ENCODE measurements at regions of chr17 and their contacts with region 1.

Region 1: DNA sequence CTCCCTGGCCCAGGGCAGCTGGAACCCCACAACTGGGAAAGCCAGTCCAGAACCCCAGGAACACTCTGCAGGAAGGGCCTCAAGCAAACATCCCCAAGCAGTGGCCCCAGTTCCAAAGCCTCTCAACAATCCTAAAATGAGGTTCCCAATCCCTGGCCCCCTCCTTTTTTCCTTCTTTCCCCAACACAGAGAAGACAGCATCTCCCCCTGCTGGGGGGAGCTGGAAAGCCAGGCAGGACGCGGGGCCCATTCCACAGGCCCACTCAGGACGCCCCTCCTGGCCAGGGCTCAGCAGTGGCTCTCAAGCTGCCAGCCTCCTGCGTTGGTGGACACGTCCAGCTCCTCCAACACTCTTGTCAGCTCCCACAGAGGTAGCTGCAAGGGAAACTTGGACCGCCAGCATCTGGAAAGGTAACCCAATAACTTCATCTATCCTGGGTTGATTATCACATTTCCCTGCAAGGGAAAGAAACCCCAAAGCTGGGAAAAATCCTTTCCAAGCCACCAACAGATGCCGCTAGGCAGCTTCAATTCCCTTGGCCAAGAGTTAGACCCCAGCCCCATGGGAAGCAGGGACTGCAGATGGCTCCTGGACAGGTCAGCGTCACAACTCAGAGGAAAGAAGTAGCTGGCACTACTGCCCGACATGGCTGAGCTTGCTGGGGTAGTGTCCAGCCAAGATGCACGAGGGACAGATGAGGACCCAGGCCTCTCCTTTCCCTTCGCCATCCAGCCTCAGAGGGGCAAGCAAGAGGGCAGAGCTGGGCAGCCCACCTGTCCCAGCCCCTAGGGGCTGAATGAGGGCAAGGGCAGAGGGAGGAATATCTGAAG is 7.6 kb downstream of the HDAC5 start:
- DNase-seq: peak in 1 of 2 experiments; percentile 74
- H3K4me3 ChIP-seq: no peak overlapping the region
- H3K4me3 Mint-ChIP-seq: no peak overlapping the region
- H3K27ac Mint-ChIP-seq: no peak overlapping the region
- H3K4me1 ChIP-seq: no peaks in the 10 kb centered on the region
- H3K4me1 Mint-ChIP-seq: no peaks in the 10 kb centered on the region
- H3K27me3 ChIP-seq: no peaks in the 10 kb centered on the region
- H3K27me3 Mint-ChIP-seq: no peaks in the 10 kb centered on the region
- CTCF ChIP-seq: peak; percentile 86 to 92

Region 2: GRCh38 chr17:44084131-44084544 is 31.7 kb before region 1 on chr17:
- CTCF ChIA-PET with region 1: interaction called, 38 read pairs
- POLR2A ChIA-PET with region 1: no interaction called
- intact Hi-C with region 1: no loop called
- DNase-seq: peak in 1 of 2 experiments; percentile 49
- H3K4me3 ChIP-seq: no peak overlapping the region
- H3K4me3 Mint-ChIP-seq: no peak overlapping the region
- H3K27ac Mint-ChIP-seq: no peak overlapping the region
- H3K4me1 ChIP-seq: peaks cover 25% of the 10 kb centered on the region
- H3K4me1 Mint-ChIP-seq: peaks cover 14% of the 10 kb centered on the region
- H3K27me3 ChIP-seq: no peaks in the 10 kb centered on the region
- H3K27me3 Mint-ChIP-seq: no peaks in the 10 kb centered on the region
- CTCF ChIP-seq: peak; percentile 27 to 42

Region 3: DNA sequence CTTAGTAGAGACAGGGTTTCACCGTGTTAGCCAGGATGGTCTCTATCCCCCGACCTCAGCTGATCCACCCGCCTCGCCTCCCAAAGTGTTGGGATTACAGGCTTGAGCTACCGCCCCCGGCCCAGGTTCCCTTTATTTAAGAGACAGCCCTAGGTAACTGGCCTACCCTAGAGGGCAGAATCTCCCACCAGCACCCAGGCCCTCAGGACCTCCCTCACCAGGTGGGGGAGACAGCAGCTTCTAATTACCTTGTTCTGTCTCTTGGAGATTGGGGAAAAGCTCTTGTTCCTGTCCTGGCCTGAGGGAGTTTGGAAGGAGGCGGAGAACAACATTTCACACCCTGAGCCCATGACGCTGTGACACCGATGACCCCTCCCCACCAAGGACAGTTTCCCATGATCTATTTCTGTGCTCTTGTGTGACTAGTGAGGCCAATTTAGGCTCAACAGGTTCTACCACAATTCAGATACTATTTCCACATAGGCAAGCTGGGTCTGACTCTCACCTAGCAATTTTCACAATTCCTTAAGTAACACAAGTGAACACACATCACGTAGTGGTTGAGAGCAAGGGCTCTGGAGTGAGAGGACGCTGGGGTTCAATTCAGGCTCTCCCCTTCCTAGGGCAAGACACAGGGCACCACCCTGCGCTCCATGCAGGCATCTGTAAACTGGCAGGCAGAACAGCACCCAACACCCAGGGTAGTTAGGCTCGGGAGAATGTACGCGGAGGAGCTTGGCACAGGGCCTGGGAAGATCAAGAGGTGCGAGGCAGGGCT is 12.8 kb before region 1 on chr17:
- CTCF ChIA-PET with region 1: interaction called, 17 read pairs
- POLR2A ChIA-PET with region 1: interaction called, 6 read pairs
- intact Hi-C with region 1: no loop called
- DNase-seq: peak; percentile 78 to 79
- H3K4me3 ChIP-seq: no peak overlapping the region
- H3K4me3 Mint-ChIP-seq: peak overlapping the region; percentile 32
- H3K27ac Mint-ChIP-seq: peak overlapping the region; percentile 87
- H3K4me1 ChIP-seq: peaks cover 12% of the 10 kb centered on the region
- H3K4me1 Mint-ChIP-seq: peaks cover 8% of the 10 kb centered on the region
- H3K27me3 ChIP-seq: no peaks in the 10 kb centered on the region
- H3K27me3 Mint-ChIP-seq: no peaks in the 10 kb centered on the region
- CTCF ChIP-seq: peak in 1 of 2 experiments; percentile 37